Calu3 (cell line): ENCODE measurements at regions of chr17 and their contacts with region 1.

Region 1: DNA sequence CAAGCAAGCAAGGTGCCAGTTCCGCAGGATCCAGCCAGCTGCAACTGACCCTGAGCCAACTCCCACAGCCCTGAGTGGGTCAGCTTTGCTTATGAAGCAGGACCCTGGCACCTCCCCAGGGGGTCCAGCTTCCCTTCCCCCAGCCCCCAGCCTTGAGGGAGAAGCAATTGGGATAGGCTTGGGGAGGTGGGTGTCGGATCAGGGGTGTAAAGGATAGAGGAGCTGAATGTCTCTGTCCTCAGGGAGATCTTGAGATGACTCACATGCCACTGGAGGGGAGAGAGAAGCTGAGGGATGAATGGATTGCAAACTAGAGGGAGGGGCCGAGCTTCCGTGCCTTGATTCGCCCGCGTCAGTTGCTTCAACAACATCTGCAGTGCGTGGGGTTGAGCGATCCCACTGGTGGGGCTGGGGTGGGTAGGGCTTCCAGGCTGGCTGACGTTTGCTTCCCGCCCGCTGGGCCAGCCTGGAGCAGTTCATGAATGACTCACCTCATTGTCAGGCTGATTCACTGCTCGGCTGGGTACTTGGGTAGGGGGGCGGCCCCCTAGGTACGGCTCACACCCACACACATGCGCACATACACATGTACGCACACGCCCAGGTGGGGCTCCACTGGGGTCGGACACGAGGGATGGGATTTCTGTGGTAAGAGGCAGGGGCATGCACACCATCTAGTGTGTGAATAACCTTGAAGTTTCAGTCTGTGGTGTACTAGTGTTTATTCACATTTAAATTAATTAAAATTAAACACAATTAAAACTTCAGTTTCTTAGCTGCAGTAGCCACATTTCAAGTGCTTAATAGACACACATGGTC is 3.6 kb upstream of the HROB start:
- DNase-seq: peak; percentile 91
- H3K4me3 Mint-ChIP-seq: peak overlapping the region; percentile 61
- H3K27ac Mint-ChIP-seq: peak overlapping the region; percentile 84
- H3K4me1 Mint-ChIP-seq: peaks cover 29% of the 10 kb centered on the region
- H3K27me3 Mint-ChIP-seq: no peaks in the 10 kb centered on the region
- CTCF ChIP-seq: peak; percentile 14

Region 2: GRCh38 chr17:43628089-43628650 is 509.9 kb before region 1 on chr17:
- CTCF ChIA-PET with region 1: no interaction called
- intact Hi-C with region 1: no loop called
- DNase-seq: no peak
- H3K4me3 Mint-ChIP-seq: no peak overlapping the region
- H3K27ac Mint-ChIP-seq: no peak overlapping the region
- H3K4me1 Mint-ChIP-seq: no peaks in the 10 kb centered on the region
- H3K27me3 Mint-ChIP-seq: peaks cover 98% of the 10 kb centered on the region
- CTCF ChIP-seq: no peak

Region 3: DNA sequence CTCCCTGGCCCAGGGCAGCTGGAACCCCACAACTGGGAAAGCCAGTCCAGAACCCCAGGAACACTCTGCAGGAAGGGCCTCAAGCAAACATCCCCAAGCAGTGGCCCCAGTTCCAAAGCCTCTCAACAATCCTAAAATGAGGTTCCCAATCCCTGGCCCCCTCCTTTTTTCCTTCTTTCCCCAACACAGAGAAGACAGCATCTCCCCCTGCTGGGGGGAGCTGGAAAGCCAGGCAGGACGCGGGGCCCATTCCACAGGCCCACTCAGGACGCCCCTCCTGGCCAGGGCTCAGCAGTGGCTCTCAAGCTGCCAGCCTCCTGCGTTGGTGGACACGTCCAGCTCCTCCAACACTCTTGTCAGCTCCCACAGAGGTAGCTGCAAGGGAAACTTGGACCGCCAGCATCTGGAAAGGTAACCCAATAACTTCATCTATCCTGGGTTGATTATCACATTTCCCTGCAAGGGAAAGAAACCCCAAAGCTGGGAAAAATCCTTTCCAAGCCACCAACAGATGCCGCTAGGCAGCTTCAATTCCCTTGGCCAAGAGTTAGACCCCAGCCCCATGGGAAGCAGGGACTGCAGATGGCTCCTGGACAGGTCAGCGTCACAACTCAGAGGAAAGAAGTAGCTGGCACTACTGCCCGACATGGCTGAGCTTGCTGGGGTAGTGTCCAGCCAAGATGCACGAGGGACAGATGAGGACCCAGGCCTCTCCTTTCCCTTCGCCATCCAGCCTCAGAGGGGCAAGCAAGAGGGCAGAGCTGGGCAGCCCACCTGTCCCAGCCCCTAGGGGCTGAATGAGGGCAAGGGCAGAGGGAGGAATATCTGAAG is 22.3 kb before region 1 on chr17:
- CTCF ChIA-PET with region 1: interaction called, 11 read pairs
- intact Hi-C with region 1: no loop called
- DNase-seq: peak; percentile 70
- H3K4me3 Mint-ChIP-seq: no peak overlapping the region
- H3K27ac Mint-ChIP-seq: no peak overlapping the region
- H3K4me1 Mint-ChIP-seq: no peaks in the 10 kb centered on the region
- H3K27me3 Mint-ChIP-seq: no peaks in the 10 kb centered on the region
- CTCF ChIP-seq: peak; percentile 91

Region 4: DNA sequence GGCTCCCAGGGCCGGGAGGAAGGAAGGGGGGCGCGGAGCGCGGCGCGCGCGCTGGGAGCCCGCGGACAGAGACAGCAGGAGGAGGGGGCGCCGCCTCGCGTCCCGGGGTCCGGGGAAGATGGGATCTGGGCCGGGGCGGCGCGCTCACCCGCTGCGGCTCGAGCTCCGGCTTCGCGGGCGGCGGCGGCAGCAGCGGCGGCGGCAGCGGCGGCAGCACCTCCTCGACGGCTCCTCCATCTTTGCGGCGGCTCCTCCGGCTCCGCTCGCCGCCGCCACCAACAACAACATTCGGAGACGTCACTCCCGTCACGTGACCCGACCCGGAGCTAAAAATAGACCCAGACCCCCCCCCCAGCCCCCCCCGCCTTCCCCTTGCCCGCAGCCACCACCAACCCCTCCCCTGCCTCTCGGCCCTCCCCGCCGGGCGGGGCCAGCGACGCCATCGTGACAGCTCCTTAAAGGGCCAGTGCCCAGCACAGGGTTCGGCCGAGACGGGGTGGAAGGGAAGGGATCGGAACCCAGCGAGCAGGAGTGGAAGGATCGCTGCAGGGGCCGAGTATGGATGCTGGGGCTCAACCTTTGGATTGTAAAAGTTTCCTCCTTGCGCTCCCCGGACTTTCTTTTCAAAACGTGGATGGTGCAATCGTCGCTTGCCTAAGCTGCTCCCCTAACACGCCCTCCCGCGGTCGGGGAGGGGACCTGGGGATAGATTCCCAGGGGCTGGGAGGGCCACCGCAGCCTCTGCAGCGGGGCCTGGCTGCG is 14.6 kb before region 1 on chr17 and contains the start of gene HDAC5:
- CTCF ChIA-PET with region 1: interaction called, 18 read pairs
- intact Hi-C with region 1: no loop called
- DNase-seq: peak; percentile 98
- H3K4me3 Mint-ChIP-seq: peak within 1 kb of the TSS; percentile 86
- H3K27ac Mint-ChIP-seq: peak within 1 kb of the TSS; percentile 93
- H3K4me1 Mint-ChIP-seq: no peaks in the 10 kb centered on the region
- H3K27me3 Mint-ChIP-seq: peaks cover 21% of the 10 kb centered on the region
- CTCF ChIP-seq: peak; percentile 80
- total RNA-seq, gene HDAC5: 22.4 and 22.8 TPM in 2 replicates